ENCODE measurements at regions of chr7 and their contacts with region 1.

Region 1: DNA sequence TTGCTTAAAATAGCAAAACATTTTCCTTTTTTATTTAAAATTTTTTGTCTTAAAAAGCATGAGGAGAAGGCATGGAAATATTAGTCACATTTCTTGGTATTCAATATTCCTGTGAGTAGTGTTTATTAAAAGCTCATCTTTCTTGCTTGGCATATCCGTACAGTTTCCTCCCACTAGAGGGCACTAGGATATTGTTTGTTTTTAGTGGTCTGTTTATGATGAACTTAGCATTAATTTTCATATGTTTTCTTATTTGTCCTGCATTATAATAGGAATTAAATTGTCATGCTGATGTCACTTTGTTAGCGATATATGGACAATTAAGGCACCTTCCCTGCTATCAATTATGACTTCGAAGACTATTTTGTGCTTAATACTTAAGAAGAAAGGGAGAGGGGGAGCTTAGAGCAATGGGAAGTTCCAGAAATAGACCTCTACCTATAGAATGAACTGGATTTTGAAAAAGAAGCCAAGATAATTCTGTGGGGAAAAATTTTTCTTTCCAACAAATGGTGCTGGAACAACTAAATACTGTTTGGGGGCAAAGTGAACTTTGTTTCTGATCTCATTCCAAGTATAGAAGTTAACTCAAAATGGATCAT is 91.0 kb upstream of the STRIP2 start:
- DNase-seq: peak; percentile 58
- ATAC-seq: peak; percentile 80
- H3K4me3 ChIP-seq: no peak overlapping the region
- H3K27ac ChIP-seq: no peak overlapping the region
- H3K4me1 ChIP-seq: no peaks in the 10 kb centered on the region
- H3K27me3 ChIP-seq: no peaks in the 10 kb centered on the region
- CTCF ChIP-seq: peak; percentile 76; the same call in 1 of the 2 replicates

Region 2: GRCh38 chr7:129332284-129333035 is 10.7 kb before region 1 on chr7:
- CTCF ChIA-PET with region 1: interaction called, 19 read pairs
- POLR2A ChIA-PET with region 1: no interaction called
- in situ Hi-C with region 1: no loop called
- intact Hi-C with region 1: no loop called
- DNase-seq: peak; percentile 78
- ATAC-seq: peak; percentile 88
- H3K4me3 ChIP-seq: no peak overlapping the region
- H3K27ac ChIP-seq: no peak overlapping the region
- H3K4me1 ChIP-seq: peaks cover 3% of the 10 kb centered on the region; the same call in 1 of the 2 replicates
- H3K27me3 ChIP-seq: no peaks in the 10 kb centered on the region
- CTCF ChIP-seq: no peak